Panc1 (cell line): ENCODE measurements at regions of chr6 and their contacts with region 1.

Region 1: GRCh38 chr6:137707590-137708360 is 159.3 kb upstream of the TNFAIP3 start:
- DNase-seq: peak; percentile 25
- ATAC-seq: peak; percentile 73
- H3K4me3 ChIP-seq: peak overlapping the region; percentile 11 to 19; a peak in 2 of 4 replicates
- H3K27ac ChIP-seq: no peak overlapping the region
- H3K4me1 ChIP-seq: peaks cover 10% of the 10 kb centered on the region; the same call in 1 of the 2 replicates
- H3K27me3 ChIP-seq: no peaks in the 10 kb centered on the region
- CTCF ChIP-seq: peak; percentile 86

Region 2: DNA sequence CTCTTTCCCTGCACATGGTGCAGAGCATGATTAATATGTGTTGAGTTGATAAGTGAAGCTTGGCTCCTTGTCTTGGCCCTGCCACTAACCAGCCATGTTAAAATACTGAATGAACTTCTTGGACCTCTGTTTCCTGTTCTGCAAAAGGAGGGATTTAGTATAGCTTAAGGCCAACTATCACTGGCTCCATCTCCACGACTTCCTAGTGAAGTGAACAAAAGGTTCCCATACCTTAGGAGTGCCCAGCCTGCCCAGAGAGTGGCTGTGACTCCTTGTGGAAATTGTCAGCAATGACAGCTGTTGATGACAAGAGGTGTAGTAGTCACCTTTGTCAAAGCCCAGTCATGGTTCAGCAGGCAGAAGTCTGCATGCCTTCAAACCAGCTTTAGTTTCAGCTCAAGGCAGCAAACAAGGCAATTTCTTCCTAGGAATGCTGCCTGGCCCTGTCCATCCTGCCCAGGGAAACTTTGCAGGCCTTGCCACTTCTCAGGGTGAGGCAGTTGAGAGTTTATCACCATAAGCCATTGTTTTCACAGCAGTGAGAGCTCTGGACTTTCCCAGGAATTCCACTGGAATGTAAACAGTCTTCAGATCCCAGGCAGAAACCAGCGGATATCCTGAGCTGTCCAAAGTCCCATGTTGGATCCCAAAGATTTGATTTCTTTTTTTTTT is 10.4 kb before region 1 on chr6:
- CTCF ChIA-PET with region 1: no interaction called
- POLR2A ChIA-PET with region 1: no interaction called
- in situ Hi-C with region 1: no loop called
- intact Hi-C with region 1: no loop called
- DNase-seq: no peak
- ATAC-seq: peak; percentile 92
- H3K4me3 ChIP-seq: no peak overlapping the region
- H3K27ac ChIP-seq: peak overlapping the region; percentile 61
- H3K4me1 ChIP-seq: peaks cover 12% of the 10 kb centered on the region
- H3K27me3 ChIP-seq: no peaks in the 10 kb centered on the region
- CTCF ChIP-seq: no peak

Region 3: DNA sequence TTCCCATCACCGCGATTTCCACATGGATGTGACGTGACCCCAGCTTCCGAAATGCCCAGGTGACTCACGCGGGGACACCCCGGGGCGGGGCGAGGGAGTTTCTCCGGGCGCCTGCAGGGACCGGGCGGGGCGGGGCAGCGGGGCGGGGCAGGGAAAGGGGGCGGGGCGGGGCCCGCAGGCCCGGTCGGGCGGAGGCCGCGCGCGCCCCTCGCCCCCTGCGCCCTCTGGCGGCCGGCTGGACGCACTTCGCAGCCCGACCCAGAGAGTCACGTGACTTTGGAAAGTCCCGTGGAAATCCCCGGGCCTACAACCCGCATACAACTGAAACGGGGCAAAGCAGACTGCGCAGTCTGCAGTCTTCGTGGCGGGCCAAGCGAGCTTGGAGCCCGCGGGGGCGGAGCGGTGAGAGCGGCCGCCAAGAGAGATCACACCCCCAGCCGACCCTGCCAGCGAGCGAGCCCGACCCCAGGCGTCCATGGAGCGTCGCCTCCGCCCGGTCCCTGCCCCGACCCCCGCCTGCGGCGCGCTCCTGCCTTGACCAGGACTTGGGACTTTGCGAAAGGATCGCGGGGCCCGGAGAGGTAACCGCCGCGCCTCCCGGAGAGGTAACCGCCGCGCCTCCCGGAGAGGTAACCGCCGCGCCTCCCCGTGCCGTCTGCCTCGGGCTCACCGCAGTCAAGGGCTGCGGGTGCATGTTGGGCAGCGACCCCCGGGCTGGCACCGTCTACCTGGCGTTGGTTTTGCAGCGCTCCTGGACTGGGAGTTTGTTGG is 159.3 kb after region 1 on chr6 and contains the start of gene TNFAIP3:
- CTCF ChIA-PET with region 1: interaction called, 4 read pairs
- POLR2A ChIA-PET with region 1: no interaction called
- in situ Hi-C with region 1: no loop called
- intact Hi-C with region 1: loop called (anchors 2 kb)
- DNase-seq: peak; percentile 56
- ATAC-seq: peak; percentile 93
- H3K4me3 ChIP-seq: peak within 1 kb of the TSS; percentile 74 to 83
- H3K27ac ChIP-seq: peak within 1 kb of the TSS; percentile 59
- H3K4me1 ChIP-seq: peaks cover 23% of the 10 kb centered on the region
- H3K27me3 ChIP-seq: no peaks in the 10 kb centered on the region
- CTCF ChIP-seq: peak; percentile 97
- total RNA-seq, gene TNFAIP3: 15.0 TPM

Region 4: GRCh38 chr6:137944793-137945498 is 237.2 kb after region 1 on chr6:
- CTCF ChIA-PET with region 1: interaction called, 3 read pairs
- POLR2A ChIA-PET with region 1: no interaction called
- in situ Hi-C with region 1: no loop called
- intact Hi-C with region 1: loop called (anchors 10 kb)
- DNase-seq: peak; percentile 13
- ATAC-seq: peak; percentile 86
- H3K4me3 ChIP-seq: no peak overlapping the region
- H3K27ac ChIP-seq: no peak overlapping the region
- H3K4me1 ChIP-seq: no peaks in the 10 kb centered on the region
- H3K27me3 ChIP-seq: no peaks in the 10 kb centered on the region; the same call in none of the 2 replicates
- CTCF ChIP-seq: peak; percentile 80

Region 5: GRCh38 chr6:137975188-137975940 is 267.6 kb after region 1 on chr6:
- CTCF ChIA-PET with region 1: no interaction called
- POLR2A ChIA-PET with region 1: no interaction called
- in situ Hi-C with region 1: no loop called
- intact Hi-C with region 1: loop called (anchors 2 kb)
- DNase-seq: no peak
- ATAC-seq: no peak
- H3K4me3 ChIP-seq: no peak overlapping the region
- H3K27ac ChIP-seq: no peak overlapping the region
- H3K4me1 ChIP-seq: peaks cover 12% of the 10 kb centered on the region
- H3K27me3 ChIP-seq: no peaks in the 10 kb centered on the region
- CTCF ChIP-seq: peak; percentile 38; the same call in 1 of the 2 replicates

Region 6: DNA sequence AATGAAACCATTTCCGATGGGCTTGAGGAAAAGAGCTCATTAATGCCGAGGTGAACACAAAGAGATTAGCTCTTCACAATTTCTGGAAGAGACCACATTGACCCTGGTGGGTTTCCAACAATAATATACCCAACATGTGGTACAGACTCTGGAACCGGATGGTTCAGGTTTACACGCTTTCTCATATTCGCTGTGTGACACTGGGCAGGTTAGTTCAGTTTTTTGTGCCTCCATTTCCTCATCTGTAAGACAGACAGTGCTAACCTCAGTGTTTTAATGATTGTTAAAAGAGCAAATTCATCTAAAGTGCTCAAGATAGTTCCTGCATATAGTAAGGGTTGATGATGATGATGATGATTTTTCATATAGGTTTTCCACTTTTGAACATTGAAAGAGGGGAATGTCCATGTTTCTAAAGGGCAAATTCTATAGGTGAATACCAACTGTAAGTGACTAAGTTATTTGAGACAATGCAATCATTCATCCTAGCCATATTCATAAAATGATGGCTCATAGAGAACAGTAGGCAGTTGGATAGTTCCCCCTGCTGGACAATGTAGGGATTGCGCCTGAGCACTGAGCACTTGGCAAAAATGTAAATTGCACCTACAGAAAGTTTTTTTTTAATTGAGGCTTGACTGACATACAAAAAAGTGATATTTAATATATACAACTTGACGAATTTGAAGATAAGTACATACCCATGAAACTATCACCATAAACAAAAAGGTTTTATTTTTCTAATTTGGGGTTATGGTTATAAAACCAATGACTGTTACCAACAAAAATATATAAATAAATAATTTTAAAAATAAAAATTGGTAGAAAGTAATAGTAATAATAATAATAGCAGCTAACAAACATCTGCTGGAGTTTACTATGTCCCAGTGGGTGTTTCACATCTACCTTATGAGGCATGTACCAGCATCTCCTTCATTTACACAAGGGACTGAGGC is 401.5 kb after region 1 on chr6:
- CTCF ChIA-PET with region 1: no interaction called
- POLR2A ChIA-PET with region 1: no interaction called
- in situ Hi-C with region 1: no loop called
- intact Hi-C with region 1: loop called (anchors 5 kb)
- DNase-seq: peak; percentile 88
- ATAC-seq: peak; percentile 42; the same call in 1 of the 2 replicates
- H3K4me3 ChIP-seq: peak overlapping the region; percentile 87 to 90
- H3K27ac ChIP-seq: peak overlapping the region; percentile 96
- H3K4me1 ChIP-seq: peaks cover 12% of the 10 kb centered on the region
- H3K27me3 ChIP-seq: no peaks in the 10 kb centered on the region
- CTCF ChIP-seq: peak; percentile 87; the same call in 1 of the 2 replicates